ENCODE measurements at regions of chr1 and their contacts with region 1.

Region 1: GRCh38 chr1:192808518-192809306 is at the start of gene RGS2:
- DNase-seq: peak; percentile 79
- ATAC-seq: peak; percentile 91
- H3K4me3 Mint-ChIP-seq: peak within 1 kb of the TSS; percentile 96
- H3K27ac Mint-ChIP-seq: peak within 1 kb of the TSS; percentile 90
- H3K4me1 Mint-ChIP-seq: peaks cover 48% of the 10 kb centered on the region
- H3K27me3 Mint-ChIP-seq: no peaks in the 10 kb centered on the region
- CTCF ChIP-seq: no peak
- total RNA-seq, gene RGS2: 31.1 and 32.7 TPM in 2 replicates

Region 2: GRCh38 chr1:192311281-192311680 is 497.4 kb before region 1 on chr1:
- CTCF ChIA-PET with region 1: no interaction called
- POLR2A ChIA-PET with region 1: no interaction called
- intact Hi-C with region 1: no loop called
- DNase-seq: no peak
- ATAC-seq: no peak
- H3K4me3 Mint-ChIP-seq: no peak overlapping the region
- H3K27ac Mint-ChIP-seq: no peak overlapping the region
- H3K4me1 Mint-ChIP-seq: no peaks in the 10 kb centered on the region
- H3K27me3 Mint-ChIP-seq: no peaks in the 10 kb centered on the region
- CTCF ChIP-seq: no peak

Region 3: DNA sequence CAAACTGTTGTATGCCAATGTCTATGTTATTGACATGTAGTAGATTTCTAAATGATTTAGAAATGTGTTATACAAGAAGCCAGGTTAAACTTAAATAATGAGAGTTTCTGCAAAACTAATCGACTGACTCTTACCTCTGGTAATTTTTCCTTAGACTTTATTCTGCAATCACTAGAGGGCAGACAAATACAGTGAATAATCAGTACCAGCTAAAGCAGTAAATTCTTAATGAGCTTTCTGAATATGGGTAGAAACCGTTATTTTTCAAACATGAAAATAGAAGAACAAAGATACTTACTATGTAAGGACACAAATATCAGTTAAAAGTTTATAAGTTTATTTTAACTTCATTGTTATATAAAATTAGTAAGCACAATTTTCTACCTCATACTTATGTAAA is 331.1 kb before region 1 on chr1:
- CTCF ChIA-PET with region 1: interaction called, 15 read pairs
- POLR2A ChIA-PET with region 1: no interaction called
- intact Hi-C with region 1: loop called (anchors 1 kb)
- DNase-seq: no peak
- ATAC-seq: peak; percentile 75
- H3K4me3 Mint-ChIP-seq: no peak overlapping the region
- H3K27ac Mint-ChIP-seq: no peak overlapping the region
- H3K4me1 Mint-ChIP-seq: no peaks in the 10 kb centered on the region
- H3K27me3 Mint-ChIP-seq: peaks cover 7% of the 10 kb centered on the region
- CTCF ChIP-seq: peak; percentile 26

Region 4: GRCh38 chr1:192580351-192580962 is 228.3 kb before region 1 on chr1:
- CTCF ChIA-PET with region 1: interaction called, 4 read pairs
- POLR2A ChIA-PET with region 1: interaction called, 7 read pairs
- intact Hi-C with region 1: loop called (anchors 1 kb)
- DNase-seq: no peak
- ATAC-seq: no peak
- H3K4me3 Mint-ChIP-seq: peak overlapping the region; percentile 74
- H3K27ac Mint-ChIP-seq: no peak overlapping the region
- H3K4me1 Mint-ChIP-seq: peaks cover 45% of the 10 kb centered on the region
- H3K27me3 Mint-ChIP-seq: peaks cover 2% of the 10 kb centered on the region
- CTCF ChIP-seq: no peak

Region 5: DNA sequence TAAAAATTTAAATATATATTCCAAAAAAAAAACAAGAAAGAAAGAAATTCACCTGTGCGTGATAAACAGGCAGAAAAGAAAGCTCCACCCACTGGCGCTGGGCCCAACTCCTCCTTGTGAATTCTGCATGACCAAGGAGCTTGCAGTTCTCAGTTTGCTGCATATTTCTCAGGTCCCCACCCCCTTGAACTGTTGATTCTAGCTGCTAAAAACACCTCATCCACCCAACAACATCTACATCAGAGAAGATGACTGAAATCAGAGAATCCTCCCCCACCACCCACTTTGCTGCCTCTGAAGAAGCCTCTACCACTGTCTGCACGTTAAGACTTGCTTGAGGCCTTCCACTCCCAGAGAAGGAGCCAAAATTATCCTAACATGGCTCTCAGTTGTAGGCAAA is 105.0 kb after region 1 on chr1:
- CTCF ChIA-PET with region 1: no interaction called
- POLR2A ChIA-PET with region 1: no interaction called
- intact Hi-C with region 1: no loop called
- DNase-seq: no peak
- ATAC-seq: no peak
- H3K4me3 Mint-ChIP-seq: no peak overlapping the region
- H3K27ac Mint-ChIP-seq: no peak overlapping the region
- H3K4me1 Mint-ChIP-seq: no peaks in the 10 kb centered on the region
- H3K27me3 Mint-ChIP-seq: no peaks in the 10 kb centered on the region
- CTCF ChIP-seq: no peak

Region 6: GRCh38 chr1:192941722-192942411 is 133.2 kb after region 1 on chr1:
- CTCF ChIA-PET with region 1: no interaction called
- POLR2A ChIA-PET with region 1: no interaction called
- intact Hi-C with region 1: loop called (anchors 5 kb)
- DNase-seq: no peak
- ATAC-seq: peak; percentile 62
- H3K4me3 Mint-ChIP-seq: no peak overlapping the region
- H3K27ac Mint-ChIP-seq: peak overlapping the region; percentile 77
- H3K4me1 Mint-ChIP-seq: peaks cover 10% of the 10 kb centered on the region
- H3K27me3 Mint-ChIP-seq: no peaks in the 10 kb centered on the region
- CTCF ChIP-seq: no peak

Region 7: DNA sequence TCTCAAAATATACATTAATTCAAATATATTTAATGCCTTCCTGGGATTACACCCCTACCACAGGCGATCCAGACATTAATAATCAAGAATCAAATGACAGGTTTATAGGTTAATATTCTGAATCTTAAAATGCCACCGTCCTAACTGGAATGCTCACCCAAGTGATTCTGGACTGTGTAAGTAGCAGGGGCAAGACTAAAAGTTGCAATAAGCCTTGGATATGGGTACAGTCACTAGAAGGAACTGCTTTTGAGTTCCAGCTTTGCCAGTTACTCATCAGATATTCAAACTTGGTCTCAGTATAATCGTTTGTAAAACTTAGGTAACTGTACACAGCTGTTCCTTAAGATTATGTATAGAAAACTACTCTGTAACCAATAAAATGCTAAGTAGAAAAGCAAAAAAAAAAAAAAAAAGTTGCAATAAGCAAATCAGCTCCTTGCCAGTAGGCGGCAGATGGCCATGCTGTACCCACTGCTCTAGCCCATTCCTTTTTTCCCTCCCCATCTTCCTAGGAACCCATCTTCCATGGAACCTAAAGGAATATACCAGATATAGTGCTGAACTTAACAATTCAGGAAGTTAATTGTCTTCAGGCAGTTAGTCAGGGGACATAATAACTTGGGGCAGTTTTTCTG is 261.2 kb after region 1 on chr1:
- CTCF ChIA-PET with region 1: no interaction called
- POLR2A ChIA-PET with region 1: no interaction called
- intact Hi-C with region 1: no loop called
- DNase-seq: no peak
- ATAC-seq: peak; percentile 25
- H3K4me3 Mint-ChIP-seq: no peak overlapping the region
- H3K27ac Mint-ChIP-seq: peak overlapping the region; percentile 65
- H3K4me1 Mint-ChIP-seq: peaks cover 45% of the 10 kb centered on the region
- H3K27me3 Mint-ChIP-seq: no peaks in the 10 kb centered on the region
- CTCF ChIP-seq: no peak

Region 8: DNA sequence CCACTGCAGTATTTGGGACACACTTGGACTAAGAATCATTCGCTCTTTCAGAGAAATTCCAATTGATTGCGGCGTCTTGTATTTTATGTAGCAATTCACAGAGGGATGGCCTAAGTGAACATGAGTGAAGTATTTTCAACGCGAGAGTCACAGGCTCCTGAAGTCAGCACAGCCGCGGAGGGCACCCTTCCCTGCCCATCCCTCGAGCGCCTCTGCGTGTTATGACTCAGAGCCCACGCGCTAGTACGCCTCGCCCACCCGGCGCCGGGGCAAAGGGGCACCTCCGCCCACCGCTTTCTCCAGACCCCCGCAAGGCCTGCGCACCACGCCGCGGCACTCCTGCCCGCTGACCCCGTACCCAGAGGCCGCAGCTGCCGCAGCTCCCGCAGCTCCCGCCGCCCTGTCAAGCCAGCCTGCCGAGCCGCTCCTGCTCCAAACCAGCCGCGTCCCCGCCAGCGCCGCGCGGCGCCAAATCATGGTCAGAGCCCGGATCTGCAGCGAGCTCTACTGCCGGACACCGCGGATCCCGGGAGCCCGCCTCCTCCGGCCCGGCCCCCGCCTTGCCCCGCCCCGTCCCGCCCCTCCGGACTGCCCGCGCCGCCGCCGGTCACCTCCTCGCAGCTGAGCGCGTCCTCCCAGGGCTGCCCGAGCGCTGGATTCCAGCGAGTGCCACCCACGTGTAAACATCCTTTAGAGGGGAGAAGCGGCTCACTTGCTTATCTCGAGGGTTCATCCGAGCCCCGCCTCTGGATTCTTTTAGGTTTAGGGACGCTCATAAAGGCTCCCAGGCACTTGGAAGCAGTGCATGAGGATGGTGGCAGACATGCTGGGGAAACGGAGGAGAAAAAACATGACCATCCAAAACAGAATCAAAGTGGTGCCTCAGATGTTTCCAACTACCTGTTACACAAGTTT is 296.5 kb after region 1 on chr1 and contains the start of gene GLRX2:
- CTCF ChIA-PET with region 1: no interaction called
- POLR2A ChIA-PET with region 1: no interaction called
- intact Hi-C with region 1: loop called (anchors 1 kb)
- DNase-seq: peak; percentile 50
- ATAC-seq: peak; percentile 85
- H3K4me3 Mint-ChIP-seq: peak within 1 kb of the TSS; percentile 93
- H3K27ac Mint-ChIP-seq: peak within 1 kb of the TSS; percentile 76
- H3K4me1 Mint-ChIP-seq: peaks cover 18% of the 10 kb centered on the region
- H3K27me3 Mint-ChIP-seq: no peaks in the 10 kb centered on the region
- CTCF ChIP-seq: no peak
- total RNA-seq, gene GLRX2: 10.9 and 14.4 TPM in 2 replicates

Region 9: DNA sequence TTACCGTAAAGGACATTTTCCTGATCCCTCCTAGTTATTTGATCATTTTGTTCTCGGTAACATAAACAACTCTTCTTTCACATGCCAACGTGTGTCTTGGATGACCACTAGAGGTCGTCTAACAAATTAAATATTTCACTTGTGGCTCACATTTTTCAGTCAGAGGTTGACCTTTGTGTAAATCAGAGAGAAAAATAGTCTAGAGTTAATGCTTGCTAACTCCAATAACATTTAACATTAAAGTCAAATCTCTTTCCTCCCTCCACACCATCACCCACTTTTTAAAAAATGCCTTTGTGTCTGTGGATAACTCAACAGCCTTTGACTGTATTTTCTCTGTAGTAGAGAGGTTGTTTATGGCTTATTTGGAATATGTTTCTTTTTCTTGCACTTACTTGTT is 598.2 kb after region 1 on chr1:
- CTCF ChIA-PET with region 1: no interaction called
- POLR2A ChIA-PET with region 1: no interaction called
- intact Hi-C with region 1: loop called (anchors 10 kb)
- DNase-seq: no peak
- ATAC-seq: no peak
- H3K4me3 Mint-ChIP-seq: no peak overlapping the region
- H3K27ac Mint-ChIP-seq: no peak overlapping the region
- H3K4me1 Mint-ChIP-seq: peaks cover 4% of the 10 kb centered on the region
- H3K27me3 Mint-ChIP-seq: no peaks in the 10 kb centered on the region
- CTCF ChIP-seq: peak; percentile 57

Measured in activated B cell treated with CpG ODN at 0.5 μM for 24 hours (primary cell).